ENCODE measurements at regions of chr2 and their contacts with region 1.

Region 1: DNA sequence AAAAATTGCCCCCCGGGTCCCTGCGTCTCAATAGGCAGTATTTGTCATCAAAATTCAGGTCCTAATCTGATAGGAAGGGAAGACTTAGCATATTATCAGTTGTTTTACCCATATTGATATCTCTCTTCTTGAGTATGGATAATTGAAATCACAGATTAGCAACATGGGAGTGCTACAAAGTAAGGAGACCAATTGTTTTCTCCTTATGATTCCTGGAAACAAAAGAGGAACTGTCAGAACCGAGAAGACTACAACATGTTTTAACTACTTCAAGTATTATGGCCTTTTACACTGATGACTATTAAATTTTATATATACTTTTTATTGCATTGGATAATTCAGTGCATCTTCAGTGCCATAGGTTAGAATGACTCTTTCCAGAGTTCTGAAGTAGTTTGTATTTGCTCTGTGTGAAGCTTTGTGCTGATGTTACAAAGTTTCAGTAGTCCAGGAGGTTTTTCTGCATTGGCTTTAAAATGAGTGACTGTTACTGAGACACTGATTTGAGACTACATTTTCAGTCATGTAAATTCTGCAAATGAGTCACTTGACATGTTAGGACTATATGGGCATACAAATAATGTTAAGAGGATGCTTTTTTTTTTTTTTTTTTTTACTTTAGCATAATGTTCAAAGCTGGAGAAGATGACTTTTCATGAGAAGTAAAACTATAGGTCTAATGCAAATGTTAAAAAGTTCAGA is 19.7 kb upstream of the TLK1 start:
- DNase-seq: no peak
- H3K4me3 Mint-ChIP-seq: no peak overlapping the region
- H3K27ac Mint-ChIP-seq: no peak overlapping the region
- H3K4me1 Mint-ChIP-seq: peaks cover 20% of the 10 kb centered on the region
- H3K27me3 Mint-ChIP-seq: peaks cover 6% of the 10 kb centered on the region

Region 2: DNA sequence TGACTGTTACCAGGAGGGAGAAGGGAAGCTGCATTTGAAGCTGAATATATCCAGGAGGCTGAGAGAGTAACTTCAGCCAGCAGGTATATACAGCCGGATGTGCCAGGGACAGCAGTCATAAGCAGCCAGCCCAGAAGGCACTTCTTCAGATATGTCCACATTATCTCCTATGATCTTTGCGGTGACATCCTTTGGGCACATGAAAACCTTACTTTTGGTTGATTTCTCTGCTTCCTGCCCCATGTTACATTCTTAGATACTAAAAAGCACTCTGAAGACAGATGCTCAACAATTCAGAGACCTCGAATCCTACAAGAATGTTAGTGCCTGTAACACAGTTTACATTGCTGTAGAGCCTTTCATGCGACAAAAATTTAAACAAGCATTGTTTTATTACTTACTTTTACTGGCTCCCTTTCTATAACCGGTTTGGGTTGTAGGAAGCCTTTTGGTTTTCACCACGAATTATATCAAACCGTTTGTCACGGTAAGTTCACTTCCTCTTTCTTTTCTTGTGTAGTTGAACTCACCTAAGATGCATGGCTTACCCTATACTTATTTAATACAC is 30.6 kb after region 1 on chr2:
- CTCF ChIA-PET with region 1: interaction called, 7 read pairs
- intact Hi-C with region 1: loop called (anchors 2 kb)
- DNase-seq: peak; percentile 60
- H3K4me3 Mint-ChIP-seq: peak overlapping the region; percentile 51
- H3K27ac Mint-ChIP-seq: peak overlapping the region; percentile 56
- H3K4me1 Mint-ChIP-seq: peaks cover 13% of the 10 kb centered on the region
- H3K27me3 Mint-ChIP-seq: no peaks in the 10 kb centered on the region

Measured in activated naive CD4-positive, alpha-beta T cell treated with anti-CD3 and anti-CD28 coated beads for 36 hours (primary cell).